Activated CD4-positive, alpha-beta T cell treated with anti-CD3 and anti-CD28 coated beads, Interleukin-2, amount 10 ng/mL, durations not matched to agents 24 days and 14 days (primary cell): ENCODE measurements at regions of chr19 and their contacts with region 1.

Region 1: GRCh38 chr19:11435058-11435832 is at the starts of genes ODAD3 and PRKCSH:
- DNase-seq: peak; percentile 100
- H3K4me3 Mint-ChIP-seq: peak within 1 kb of the TSS; percentile 98
- H3K27ac Mint-ChIP-seq: peak within 1 kb of the TSS; percentile 95
- H3K4me1 Mint-ChIP-seq: peaks cover 17% of the 10 kb centered on the region
- H3K27me3 Mint-ChIP-seq: peaks cover 2% of the 10 kb centered on the region
- total RNA-seq, gene ODAD3: 0.12 and 0.24 TPM in 2 replicates
- total RNA-seq, gene PRKCSH: 288 TPM in 2 replicates

Region 2: DNA sequence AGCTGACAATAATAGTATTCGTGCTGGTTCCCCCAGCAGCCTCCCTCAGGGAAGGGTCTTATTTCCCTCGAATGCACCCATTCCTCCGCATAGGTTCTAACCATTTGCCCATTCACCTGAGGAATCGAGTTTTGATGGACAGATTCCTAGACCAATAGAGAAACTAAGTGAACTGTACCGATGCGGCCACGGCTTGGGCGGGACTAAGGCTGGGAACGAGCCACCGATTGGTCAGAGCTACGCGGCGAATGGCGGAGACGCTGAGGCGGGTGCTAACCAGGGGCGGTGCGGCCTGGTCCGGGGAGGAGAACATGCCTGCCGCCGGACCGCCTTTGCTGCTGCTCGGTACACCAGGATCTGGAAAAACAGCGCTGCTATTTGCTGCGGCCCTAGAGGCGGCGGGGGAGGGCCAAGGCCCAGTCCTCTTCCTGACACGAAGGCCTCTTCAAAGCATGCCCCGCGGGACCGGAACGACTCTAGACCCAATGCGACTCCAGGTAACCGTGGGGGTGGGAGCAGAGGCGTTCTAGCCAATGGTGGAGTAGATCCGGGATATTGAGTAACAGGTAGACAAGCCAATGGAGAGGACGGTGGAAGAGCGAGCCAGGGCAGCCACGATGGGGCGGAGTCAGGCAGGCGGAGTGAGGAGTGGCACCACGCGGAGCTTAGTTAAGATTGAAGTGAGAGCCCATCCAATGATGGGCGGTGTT is 60.7 kb before region 1 on chr19 and contains the start of gene SWSAP1:
- intact Hi-C with region 1: loop called (anchors 1 kb)
- DNase-seq: peak; percentile 99
- H3K4me3 Mint-ChIP-seq: no peak within 1 kb of the TSS
- H3K27ac Mint-ChIP-seq: no peak within 1 kb of the TSS
- H3K4me1 Mint-ChIP-seq: peaks cover 25% of the 10 kb centered on the region
- H3K27me3 Mint-ChIP-seq: no peaks in the 10 kb centered on the region
- total RNA-seq, gene SWSAP1: 2.3 and 2.6 TPM in 2 replicates

Region 3: GRCh38 chr19:11482384-11483050 is 47.3 kb after region 1 on chr19:
- intact Hi-C with region 1: loop called (anchors 1 kb)
- DNase-seq: peak; percentile 96
- H3K4me3 Mint-ChIP-seq: peak overlapping the region; percentile 84
- H3K27ac Mint-ChIP-seq: peak overlapping the region; percentile 90
- H3K4me1 Mint-ChIP-seq: peaks cover 18% of the 10 kb centered on the region
- H3K27me3 Mint-ChIP-seq: peaks cover 29% of the 10 kb centered on the region

Region 4: DNA sequence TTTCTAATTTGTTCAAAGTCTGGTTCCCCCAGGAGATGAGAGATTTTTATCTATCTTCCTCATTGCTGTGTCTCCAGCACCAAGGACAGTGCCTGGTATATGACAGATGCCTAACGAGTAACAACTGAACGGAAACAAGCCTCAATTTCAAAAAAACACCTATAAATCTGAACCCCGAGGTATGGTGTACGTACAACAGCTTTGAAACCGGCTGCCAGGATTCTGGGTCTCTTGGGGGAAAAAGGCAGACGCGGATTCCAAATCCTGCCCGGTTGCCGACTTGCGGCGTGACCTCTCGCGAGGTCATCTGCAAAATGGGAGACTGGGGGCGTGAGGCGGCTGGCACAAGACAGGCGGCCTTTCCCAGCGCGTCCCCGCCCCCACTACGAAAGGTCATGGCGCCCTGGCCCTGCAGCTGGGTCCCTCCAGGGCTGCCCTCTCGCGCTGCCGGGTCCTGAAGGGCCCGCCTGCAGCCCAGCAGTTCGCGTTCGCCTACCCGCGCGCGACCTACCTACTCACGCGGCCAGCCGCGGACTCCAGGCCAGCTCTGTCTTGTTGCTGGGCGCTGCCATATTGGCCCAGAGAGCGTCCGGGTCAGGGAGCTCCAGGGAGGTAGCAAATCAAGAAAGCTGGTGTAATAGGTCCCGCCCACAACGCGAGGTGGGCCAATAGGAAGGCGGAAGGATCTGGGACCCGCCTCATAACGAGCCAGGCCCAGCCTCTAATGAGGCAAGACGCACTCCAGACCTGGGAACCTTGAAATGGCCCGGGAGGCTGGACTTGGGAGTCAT is 93.5 kb after region 1 on chr19 and contains the start of gene ECSIT:
- intact Hi-C with region 1: loop called (anchors 1 kb)
- DNase-seq: peak; percentile 97
- H3K4me3 Mint-ChIP-seq: peak within 1 kb of the TSS; percentile 93
- H3K27ac Mint-ChIP-seq: peak within 1 kb of the TSS; percentile 93
- H3K4me1 Mint-ChIP-seq: peaks cover 15% of the 10 kb centered on the region
- H3K27me3 Mint-ChIP-seq: no peaks in the 10 kb centered on the region
- total RNA-seq, gene ECSIT: 39.7 and 41.6 TPM in 2 replicates